ENCODE measurements at regions of chr17 and their contacts with region 1.

Region 1: GRCh38 chr17:58317421-58318064 is 11.1 kb downstream of the TSPOAP1 start:
- DNase-seq: peak; percentile 83
- ATAC-seq: peak; percentile 85
- H3K4me3 Mint-ChIP-seq: peak overlapping the region; percentile 27
- H3K27ac Mint-ChIP-seq: peak overlapping the region; percentile 71
- H3K4me1 Mint-ChIP-seq: peaks cover 19% of the 10 kb centered on the region
- H3K27me3 Mint-ChIP-seq: no peaks in the 10 kb centered on the region

Region 2: GRCh38 chr17:58329035-58329809 is 11.7 kb after region 1 on chr17:
- CTCF ChIA-PET with region 1: interaction called, 62 read pairs
- POLR2A ChIA-PET with region 1: interaction called, 2,649 read pairs
- DNase-seq: peak; percentile 90
- ATAC-seq: peak; percentile 18
- H3K4me3 Mint-ChIP-seq: peak overlapping the region; percentile 99
- H3K27ac Mint-ChIP-seq: peak overlapping the region; percentile 92
- H3K4me1 Mint-ChIP-seq: peaks cover 42% of the 10 kb centered on the region
- H3K27me3 Mint-ChIP-seq: peaks cover 12% of the 10 kb centered on the region

Region 3: DNA sequence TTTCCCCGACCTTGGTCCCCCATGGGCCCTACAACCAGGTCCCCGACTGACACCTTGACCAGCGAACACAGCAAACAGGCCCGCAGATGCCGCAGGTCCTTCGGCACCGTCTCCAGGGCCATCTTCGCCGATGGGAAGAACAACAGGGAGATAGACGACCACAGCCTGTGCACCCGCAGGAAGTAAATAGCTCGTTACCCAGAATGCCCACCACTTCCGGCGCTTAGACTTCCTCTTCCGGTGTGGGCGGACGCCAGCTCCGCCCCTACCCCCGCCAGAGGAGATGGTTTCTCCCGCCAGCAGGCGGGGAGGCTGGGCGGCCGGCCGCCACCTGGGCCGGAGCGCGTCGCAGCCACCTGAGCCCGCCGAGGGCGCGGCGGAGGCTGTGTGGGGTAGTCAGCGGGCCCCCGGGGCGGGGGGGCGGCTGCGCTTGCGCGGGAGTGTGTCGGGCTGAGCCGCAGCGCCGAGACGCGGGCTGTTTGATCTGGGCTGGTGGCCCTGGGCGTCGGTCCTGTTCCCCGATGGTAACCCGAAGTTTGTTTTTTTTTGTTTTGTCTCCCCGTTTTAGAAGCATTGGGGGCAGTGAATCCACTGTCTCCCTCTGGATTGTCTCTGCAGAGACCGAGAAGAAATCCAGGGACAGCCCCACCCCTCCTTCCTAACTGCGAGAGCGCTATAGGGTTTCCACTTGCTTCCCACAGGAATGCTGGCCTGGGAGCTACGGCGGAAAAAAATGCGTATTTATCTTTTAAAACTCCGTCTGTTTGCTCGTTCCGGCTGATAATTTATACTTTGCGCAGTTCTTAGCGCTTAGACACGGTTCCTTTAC is 34.7 kb after region 1 on chr17 and contains the start of gene SUPT4H1:
- CTCF ChIA-PET with region 1: interaction called, 235 read pairs
- POLR2A ChIA-PET with region 1: interaction called, 2,649 read pairs
- DNase-seq: peak; percentile 94
- ATAC-seq: peak; percentile 91
- H3K4me3 Mint-ChIP-seq: peak within 1 kb of the TSS; percentile 100
- H3K27ac Mint-ChIP-seq: peak within 1 kb of the TSS; percentile 97
- H3K4me1 Mint-ChIP-seq: peaks cover 50% of the 10 kb centered on the region
- H3K27me3 Mint-ChIP-seq: no peaks in the 10 kb centered on the region
- total RNA-seq, gene SUPT4H1: 75.2 to 90.8 TPM

Region 4: GRCh38 chr17:58417300-58418092 is 100.0 kb after region 1 on chr17 and contains the start of gene RNF43:
- CTCF ChIA-PET with region 1: interaction called, 135 read pairs
- POLR2A ChIA-PET with region 1: interaction called, 10 read pairs
- DNase-seq: peak; percentile 91
- ATAC-seq: peak; percentile 99
- H3K4me3 Mint-ChIP-seq: no peak within 1 kb of the TSS
- H3K27ac Mint-ChIP-seq: no peak within 1 kb of the TSS
- H3K4me1 Mint-ChIP-seq: peaks cover 21% of the 10 kb centered on the region
- H3K27me3 Mint-ChIP-seq: no peaks in the 10 kb centered on the region
- total RNA-seq, gene RNF43: 0.05 TPM in 1 of 2 experiments, not detected in the other

Region 5: DNA sequence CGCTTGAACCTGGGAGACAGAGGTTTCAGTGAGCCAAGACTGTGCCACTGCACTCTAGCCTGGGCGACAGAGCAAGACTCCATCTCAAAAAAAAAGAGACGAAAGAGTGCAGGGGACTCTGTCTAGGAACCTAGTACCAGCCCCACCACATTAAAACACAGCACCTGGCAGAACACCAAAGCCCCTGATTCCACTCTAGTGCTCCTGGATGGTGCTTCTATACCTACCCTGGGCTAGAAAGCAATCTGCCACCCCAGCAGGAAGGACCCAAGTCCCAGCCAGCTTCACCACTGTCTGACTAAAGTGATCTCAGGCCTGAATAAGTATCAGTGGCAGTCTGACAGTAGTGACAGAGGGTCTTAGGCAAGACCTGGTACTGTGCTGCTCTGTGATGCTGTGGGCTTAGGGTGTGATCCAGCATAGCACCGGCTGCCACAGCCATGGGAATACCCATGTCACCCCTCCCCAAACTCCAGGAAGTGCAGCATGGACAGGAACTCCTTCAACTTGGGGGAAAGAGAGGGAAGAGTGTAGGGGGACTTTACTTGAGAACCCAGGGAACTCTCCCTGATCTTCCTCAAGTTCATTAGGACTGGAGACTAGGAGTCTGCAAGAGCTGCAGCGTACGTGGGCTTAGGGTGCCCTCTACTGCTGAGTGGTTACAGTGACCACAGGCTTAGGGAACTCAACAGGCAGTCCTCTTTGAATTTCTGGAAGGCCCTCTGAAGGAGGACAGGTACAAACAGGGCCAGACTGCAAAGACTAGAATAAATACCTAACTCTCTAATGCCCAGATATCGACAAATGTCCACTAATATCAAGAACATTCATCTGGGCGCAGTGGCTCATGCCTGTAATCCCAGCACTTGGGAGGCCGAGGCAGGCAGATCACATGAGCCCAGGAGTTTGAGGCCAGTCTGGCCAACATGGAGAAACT is 129.8 kb after region 1 on chr17:
- CTCF ChIA-PET with region 1: interaction called, 70 read pairs
- POLR2A ChIA-PET with region 1: no interaction called
- DNase-seq: peak; percentile 84
- ATAC-seq: peak; percentile 95
- H3K4me3 Mint-ChIP-seq: no peak overlapping the region
- H3K27ac Mint-ChIP-seq: no peak overlapping the region
- H3K4me1 Mint-ChIP-seq: peaks cover 4% of the 10 kb centered on the region
- H3K27me3 Mint-ChIP-seq: no peaks in the 10 kb centered on the region

Region 6: DNA sequence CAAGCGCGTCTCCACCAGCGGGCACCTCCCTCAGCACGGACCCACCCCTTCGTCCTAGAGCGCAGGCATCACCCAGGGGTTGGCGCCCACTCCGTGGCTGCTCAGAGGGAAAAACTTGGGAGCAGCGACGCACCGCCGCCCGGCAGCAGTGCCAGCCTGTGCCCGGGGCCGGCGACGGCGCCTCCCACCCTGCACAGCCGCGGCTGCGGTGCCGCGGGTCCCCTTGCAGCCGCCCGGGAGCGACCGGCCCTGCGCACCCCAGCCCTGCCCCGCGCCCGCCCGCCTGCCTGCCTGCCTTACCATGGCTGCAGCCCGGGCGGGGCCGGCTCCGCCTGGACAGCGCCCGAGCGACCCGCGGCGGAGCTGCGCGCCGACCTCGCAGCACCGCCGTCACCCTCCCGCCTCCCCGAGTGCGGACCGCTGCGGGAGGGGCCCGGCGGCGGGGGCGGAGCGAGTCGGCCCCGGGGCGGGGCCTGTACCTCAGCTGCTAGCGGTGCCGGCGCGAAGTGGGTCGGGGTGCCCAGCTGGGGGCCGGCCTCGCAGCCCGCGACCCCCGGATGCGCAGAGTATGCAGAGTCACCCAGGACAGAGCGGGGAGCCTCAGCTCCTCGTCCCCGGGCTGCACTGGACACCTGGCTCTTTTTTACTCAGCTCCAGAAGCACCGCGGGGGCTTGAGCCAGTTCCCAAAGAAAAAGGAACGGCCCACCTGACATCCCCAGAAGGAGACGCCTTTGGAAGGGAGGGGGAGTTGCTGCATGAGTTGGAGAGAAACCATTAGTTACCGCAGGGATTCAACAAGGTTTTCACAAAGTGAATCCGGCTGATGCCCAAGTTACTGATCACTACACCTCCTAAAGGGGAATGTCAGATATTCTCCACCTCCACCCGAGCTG is 214.4 kb after region 1 on chr17:
- CTCF ChIA-PET with region 1: no interaction called
- POLR2A ChIA-PET with region 1: no interaction called
- DNase-seq: peak; percentile 66
- ATAC-seq: peak; percentile 93
- H3K4me3 Mint-ChIP-seq: peak overlapping the region; percentile 35
- H3K27ac Mint-ChIP-seq: no peak overlapping the region
- H3K4me1 Mint-ChIP-seq: peaks cover 11% of the 10 kb centered on the region
- H3K27me3 Mint-ChIP-seq: peaks cover 54% of the 10 kb centered on the region